ENCODE measurements at regions of chr1 and their contacts with region 1.

Region 1: GRCh38 chr1:63950023-63950422 is 176.2 kb downstream of the ROR1 start:
- DNase-seq: peak in 2 of 7 donors; percentile 26 to 27
- H3K4me3 ChIP-seq: no peak overlapping the region
- H3K27ac ChIP-seq: no peak overlapping the region
- H3K4me1 ChIP-seq: peaks cover 0 to 5% of the 10 kb centered on the region in 2 donors
- H3K27me3 ChIP-seq: no peaks in the 10 kb centered on the region
- CTCF ChIP-seq: no peak
- POLR2A ChIP-seq: no peak

Region 2: DNA sequence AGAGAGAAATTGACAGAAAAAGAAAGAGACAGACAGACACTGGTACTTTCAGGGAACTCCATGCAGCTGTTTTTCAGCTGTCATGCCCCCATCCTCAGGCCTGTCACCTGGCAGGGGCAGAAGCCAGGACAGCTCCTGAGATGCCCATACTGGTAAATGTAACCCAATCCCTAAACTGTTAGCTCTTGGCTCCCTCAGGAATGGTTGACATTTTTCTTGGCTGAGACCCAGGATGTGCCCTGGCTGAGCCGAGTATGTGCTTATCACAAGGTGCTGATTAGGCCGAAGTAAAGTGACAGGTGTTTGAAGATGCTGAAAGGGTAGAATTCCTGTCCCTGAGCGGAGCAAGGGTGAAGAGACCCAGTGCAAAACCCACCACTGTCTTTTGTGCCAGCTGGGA is 306.1 kb before region 1 on chr1:
- intact Hi-C with region 1: no loop called
- DNase-seq: no peak
- H3K4me3 ChIP-seq: no peak overlapping the region
- H3K27ac ChIP-seq: no peak overlapping the region
- H3K4me1 ChIP-seq: no peaks in the 10 kb centered on the region
- H3K27me3 ChIP-seq: no peaks in the 10 kb centered on the region
- CTCF ChIP-seq: no peak
- POLR2A ChIP-seq: no peak

Region 3: DNA sequence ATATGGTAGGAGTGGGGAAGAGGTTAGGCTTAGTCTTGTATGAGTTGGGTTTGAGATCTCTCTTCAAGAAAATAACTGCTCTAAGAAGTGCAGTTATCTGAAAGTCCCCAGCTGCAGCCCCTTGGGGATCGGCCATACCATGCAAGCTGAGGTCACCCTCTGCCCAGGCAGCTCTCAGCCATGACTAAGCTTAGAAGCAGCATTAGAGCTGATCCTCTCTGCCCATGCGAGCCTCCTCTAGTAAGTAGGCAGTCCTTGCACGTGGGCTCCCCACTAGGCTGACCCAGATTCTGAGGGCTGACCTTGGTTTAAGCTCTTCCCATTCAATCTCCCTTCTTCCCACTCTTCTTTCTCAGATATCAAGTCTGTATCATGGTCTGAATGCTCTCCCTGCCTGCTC is 132.4 kb after region 1 on chr1:
- intact Hi-C with region 1: loop called in 1 of 2 experiments (anchors 10 kb)
- DNase-seq: peak in 3 of 7 donors; percentile 7 to 19 (median 8)
- H3K4me3 ChIP-seq: no peak overlapping the region
- H3K27ac ChIP-seq: no peak overlapping the region
- H3K4me1 ChIP-seq: no peaks in the 10 kb centered on the region
- H3K27me3 ChIP-seq: no peaks in the 10 kb centered on the region
- CTCF ChIP-seq: no peak
- POLR2A ChIP-seq: no peak